CD8-positive, alpha-beta T cell (primary cell): ENCODE measurements at regions of chr2 and their contacts with region 1.

Region 1: DNA sequence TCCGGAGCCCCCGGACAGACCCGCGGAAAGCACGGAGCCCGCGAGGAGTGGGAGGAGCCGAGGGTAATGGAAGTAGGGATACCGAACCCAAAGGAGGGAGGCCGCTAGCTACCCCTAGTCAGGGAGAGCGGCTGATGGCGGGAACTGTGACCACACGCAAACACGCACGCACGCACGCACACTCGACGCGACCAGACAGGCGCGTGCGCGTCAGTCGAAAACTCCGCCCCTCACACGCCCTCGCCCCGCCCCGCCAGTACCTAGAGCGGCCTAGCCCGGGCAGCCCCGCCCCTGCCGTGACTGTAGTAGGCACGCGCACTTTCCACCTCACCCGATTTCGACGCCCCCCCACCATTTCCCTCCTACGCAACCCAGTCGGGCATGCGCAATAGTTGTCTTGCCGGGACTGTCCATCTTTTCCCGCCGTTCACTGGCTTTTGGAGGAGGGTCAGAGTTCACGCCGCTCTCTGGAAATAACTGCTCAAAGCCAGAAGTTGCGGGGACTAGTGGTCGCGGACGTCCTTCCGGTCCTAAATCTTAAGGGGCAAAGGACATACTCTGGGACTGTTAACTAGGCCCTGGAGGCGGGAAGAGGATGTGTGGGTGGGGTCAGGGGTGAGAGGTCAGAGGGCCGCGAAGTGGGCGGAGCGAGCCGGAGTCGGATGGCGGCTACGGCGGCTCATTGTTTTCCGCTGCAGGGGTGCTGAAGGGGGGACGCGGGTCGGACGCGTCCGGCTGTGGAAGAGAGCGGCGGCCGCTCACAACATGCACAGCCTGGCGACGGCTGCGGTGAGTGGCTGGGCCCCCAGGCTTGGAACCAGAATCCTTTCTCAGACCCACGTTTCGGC is at the starts of genes CNOT9 and USP37:
- DNase-seq: peak; percentile 99 to 100 (median 100)
- ATAC-seq: peak; percentile 90
- H3K4me3 ChIP-seq: peak within 1 kb of the TSS; percentile 84 to 92
- H3K4me3 Mint-ChIP-seq: peak within 1 kb of the TSS; percentile 96
- H3K27ac ChIP-seq: peak within 1 kb of the TSS; percentile 91 to 99
- H3K27ac Mint-ChIP-seq: peak within 1 kb of the TSS; percentile 98
- H3K4me1 ChIP-seq: peaks cover 45% of the 10 kb centered on the region
- H3K4me1 Mint-ChIP-seq: peaks cover 63% of the 10 kb centered on the region
- H3K27me3 ChIP-seq: no peaks in the 10 kb centered on the region
- H3K27me3 Mint-ChIP-seq: no peaks in the 10 kb centered on the region
- CTCF ChIP-seq: no peak
- total RNA-seq, gene CNOT9: 73.9 to 79.3 TPM
- total RNA-seq, gene USP37: 22.8 to 23.2 TPM

Region 2: DNA sequence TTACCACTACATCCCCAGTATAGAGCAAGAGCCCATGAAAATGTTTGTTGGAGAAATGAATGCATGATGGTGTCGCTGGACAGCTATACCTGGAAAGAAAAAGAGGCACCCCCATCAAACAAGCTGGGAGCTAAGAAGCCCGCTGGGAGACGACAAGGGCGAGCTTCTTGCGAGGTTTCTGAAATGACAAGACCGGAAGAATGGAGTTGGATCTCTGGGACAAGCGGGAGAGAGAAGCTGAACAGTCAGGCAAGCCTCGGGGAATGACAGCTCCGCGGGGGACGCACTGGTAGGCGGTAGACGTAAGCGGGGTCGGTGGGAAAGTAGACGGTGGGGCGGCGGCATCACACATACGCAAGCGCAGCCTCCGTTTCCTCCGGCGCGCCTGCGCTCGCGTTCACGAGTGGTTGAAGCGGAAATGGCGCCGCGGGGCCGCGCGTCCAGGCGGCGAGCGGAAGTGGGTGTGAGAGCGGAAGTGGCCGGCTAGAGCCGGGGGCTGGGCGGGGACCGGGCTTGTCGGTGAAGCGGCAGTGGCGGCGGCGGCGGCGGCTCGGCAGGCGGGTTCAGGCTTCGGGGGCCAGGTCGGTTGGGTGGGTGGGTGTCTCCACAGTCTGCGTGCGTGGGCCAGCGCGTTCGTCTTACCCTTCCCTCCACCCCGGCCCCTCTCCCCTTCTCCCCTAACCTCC is 351.6 kb before region 1 on chr2 and contains the start of gene ARPC2:
- CTCF ChIA-PET with region 1: no interaction called
- POLR2A ChIA-PET with region 1: no interaction called
- intact Hi-C with region 1: loop called (anchors 1 to 2 kb)
- DNase-seq: peak; percentile 90 to 98 (median 95)
- ATAC-seq: peak; percentile 78
- H3K4me3 ChIP-seq: peak within 1 kb of the TSS; percentile 91 to 97
- H3K4me3 Mint-ChIP-seq: peak within 1 kb of the TSS; percentile 91
- H3K27ac ChIP-seq: peak within 1 kb of the TSS; percentile 87 to 99
- H3K27ac Mint-ChIP-seq: peak within 1 kb of the TSS; percentile 97
- H3K4me1 ChIP-seq: peaks cover 36% of the 10 kb centered on the region
- H3K4me1 Mint-ChIP-seq: peaks cover 45% of the 10 kb centered on the region
- H3K27me3 ChIP-seq: no peaks in the 10 kb centered on the region
- H3K27me3 Mint-ChIP-seq: no peaks in the 10 kb centered on the region
- CTCF ChIP-seq: no peak
- total RNA-seq, gene ARPC2: 521 to 547 TPM

Region 3: DNA sequence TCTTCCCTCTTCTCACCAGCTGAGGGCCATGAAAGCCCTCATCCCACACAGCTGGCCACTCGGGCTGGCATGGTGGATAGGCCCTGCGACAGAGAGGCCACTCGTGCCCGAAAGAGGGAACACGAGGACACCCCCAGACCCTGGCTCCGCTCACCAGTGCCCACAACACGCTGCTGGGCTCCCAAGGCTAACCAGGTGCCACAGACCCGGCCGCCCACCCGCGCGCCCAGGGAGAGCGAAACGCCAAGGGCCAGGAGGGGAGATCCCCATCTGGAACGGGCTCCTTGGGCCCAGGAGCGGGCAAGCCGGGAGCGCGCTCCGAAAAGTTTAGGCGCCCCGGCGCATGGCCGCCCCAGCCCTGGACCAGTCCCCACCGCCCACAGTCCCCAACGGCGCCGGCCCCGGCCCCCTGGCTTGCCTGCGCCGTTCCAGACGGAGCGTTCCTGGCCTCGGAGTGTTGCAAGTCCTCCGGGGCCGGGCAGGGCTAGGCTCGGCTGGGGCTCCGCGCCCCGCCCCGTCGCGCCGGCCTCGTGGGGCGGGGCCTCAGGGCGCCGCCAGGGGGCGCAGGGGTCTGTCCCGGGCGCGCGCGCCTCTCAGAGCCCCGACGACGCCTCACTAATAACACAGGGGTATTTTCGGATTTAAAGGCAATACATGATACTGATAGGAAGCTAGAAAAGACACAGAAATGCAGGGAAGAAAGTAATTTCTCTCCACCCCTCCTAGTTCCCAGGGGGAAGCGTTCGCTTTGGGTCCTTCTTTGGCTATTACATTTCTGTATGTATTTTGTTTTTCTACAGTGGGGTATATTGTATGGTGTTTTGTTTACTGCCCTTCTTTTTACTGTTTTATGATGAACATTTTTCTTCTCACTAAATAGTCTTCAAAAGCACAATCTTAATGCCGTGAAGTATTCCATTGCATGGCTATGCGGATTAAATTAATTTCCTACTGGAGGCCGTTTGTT is 276.1 kb before region 1 on chr2 and contains the start of gene TMBIM1:
- CTCF ChIA-PET with region 1: no interaction called
- POLR2A ChIA-PET with region 1: no interaction called
- intact Hi-C with region 1: loop called (anchors 2 to 5 kb)
- DNase-seq: peak; percentile 64 to 91 (median 79)
- ATAC-seq: peak; percentile 82
- H3K4me3 ChIP-seq: peak within 1 kb of the TSS; percentile 79 to 89
- H3K4me3 Mint-ChIP-seq: peak within 1 kb of the TSS; percentile 83
- H3K27ac ChIP-seq: peak within 1 kb of the TSS; percentile 72 to 87
- H3K27ac Mint-ChIP-seq: peak within 1 kb of the TSS; percentile 98
- H3K4me1 ChIP-seq: peaks cover 50% of the 10 kb centered on the region
- H3K4me1 Mint-ChIP-seq: peaks cover 51% of the 10 kb centered on the region
- H3K27me3 ChIP-seq: no peaks in the 10 kb centered on the region
- H3K27me3 Mint-ChIP-seq: no peaks in the 10 kb centered on the region
- CTCF ChIP-seq: peak; percentile 93
- total RNA-seq, gene TMBIM1: 80.8 to 86.7 TPM

Region 4: DNA sequence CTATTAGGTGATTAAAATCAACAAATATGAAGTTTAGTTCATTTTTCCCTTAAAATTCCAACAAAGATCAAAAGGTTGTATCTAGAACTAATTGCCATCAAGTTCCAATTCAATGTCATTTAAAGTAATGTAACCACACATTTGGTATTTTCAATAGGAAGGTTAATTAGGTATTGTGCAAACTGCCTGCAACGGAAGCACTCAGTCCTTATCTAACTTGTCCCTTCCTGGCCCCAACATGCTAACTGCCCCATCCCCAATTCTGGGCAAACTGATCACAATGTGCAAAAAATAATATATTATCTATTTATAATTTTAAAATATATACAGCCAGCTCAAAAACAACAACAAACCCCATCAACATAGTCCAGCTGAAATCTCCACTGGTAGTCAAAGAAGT is 116.3 kb before region 1 on chr2:
- CTCF ChIA-PET with region 1: no interaction called
- POLR2A ChIA-PET with region 1: no interaction called
- intact Hi-C with region 1: no loop called
- DNase-seq: no peak
- ATAC-seq: no peak
- H3K4me3 ChIP-seq: no peak overlapping the region
- H3K4me3 Mint-ChIP-seq: no peak overlapping the region
- H3K27ac ChIP-seq: no peak overlapping the region
- H3K27ac Mint-ChIP-seq: no peak overlapping the region
- H3K4me1 ChIP-seq: no peaks in the 10 kb centered on the region
- H3K4me1 Mint-ChIP-seq: no peaks in the 10 kb centered on the region
- H3K27me3 ChIP-seq: no peaks in the 10 kb centered on the region
- H3K27me3 Mint-ChIP-seq: no peaks in the 10 kb centered on the region
- CTCF ChIP-seq: no peak

Region 5: GRCh38 chr2:218659258-218659987 is 91.0 kb after region 1 on chr2 and contains the starts of genes BCS1L and ZNF142:
- CTCF ChIA-PET with region 1: no interaction called
- POLR2A ChIA-PET with region 1: no interaction called
- intact Hi-C with region 1: loop called (anchors 1 kb)
- DNase-seq: peak; percentile 78 to 97 (median 92)
- ATAC-seq: peak; percentile 98
- H3K4me3 ChIP-seq: peak within 1 kb of the TSS; percentile 95 to 98
- H3K4me3 Mint-ChIP-seq: peak within 1 kb of the TSS; percentile 97
- H3K27ac ChIP-seq: peak within 1 kb of the TSS; percentile 66 to 80
- H3K27ac Mint-ChIP-seq: peak within 1 kb of the TSS; percentile 95
- H3K4me1 ChIP-seq: peaks cover 17% of the 10 kb centered on the region
- H3K4me1 Mint-ChIP-seq: peaks cover 34% of the 10 kb centered on the region
- H3K27me3 ChIP-seq: no peaks in the 10 kb centered on the region
- H3K27me3 Mint-ChIP-seq: no peaks in the 10 kb centered on the region
- CTCF ChIP-seq: no peak
- total RNA-seq, gene BCS1L: 13.1 to 17.4 TPM
- total RNA-seq, gene ZNF142: 41.6 to 42.6 TPM

Region 6: DNA sequence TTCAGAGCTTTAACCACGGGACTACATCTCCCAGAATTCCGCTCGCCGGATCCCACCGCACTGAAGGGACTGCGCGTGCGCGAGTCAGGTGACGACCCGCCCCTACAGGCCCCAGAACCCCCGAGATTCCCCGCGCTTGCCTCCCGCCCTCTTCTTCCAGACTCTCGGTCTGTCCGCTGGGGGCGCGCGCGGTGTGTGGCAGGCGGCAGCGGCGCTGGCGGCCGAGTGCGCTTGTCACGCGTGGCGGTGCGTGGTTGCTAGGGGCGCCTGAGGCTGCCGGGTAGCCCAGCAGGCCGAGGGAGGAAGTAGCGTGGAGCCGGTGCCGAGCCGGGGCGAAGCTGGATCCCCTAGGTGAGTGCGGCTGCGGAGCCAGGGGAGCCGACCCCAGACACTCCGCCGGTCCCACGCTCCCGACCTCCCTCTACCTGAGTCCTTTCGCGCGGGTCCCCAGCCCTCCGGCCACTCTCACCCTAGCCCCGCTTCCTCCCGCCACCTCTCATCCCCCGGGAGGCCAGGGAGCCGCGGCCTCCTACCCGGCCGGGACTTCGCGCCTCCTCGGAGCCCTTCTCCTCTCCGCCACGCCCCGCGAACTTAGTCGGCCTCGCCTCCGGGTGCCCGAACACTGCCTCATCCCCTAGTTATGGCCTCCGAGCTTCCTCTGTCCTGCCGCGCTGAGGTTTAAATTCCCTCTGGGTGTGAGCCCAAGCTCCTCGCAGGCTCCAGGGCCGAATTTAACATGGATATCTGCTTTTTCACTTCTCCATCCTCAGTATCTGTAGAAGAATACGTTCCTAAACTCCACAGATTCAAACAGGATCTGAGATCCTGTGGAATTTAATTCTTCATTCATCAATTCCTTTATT is 142.5 kb after region 1 on chr2 and contains the start of gene TTLL4:
- CTCF ChIA-PET with region 1: no interaction called
- POLR2A ChIA-PET with region 1: interaction called, 3 read pairs
- intact Hi-C with region 1: loop called in 1 of 2 experiments (anchors 2 kb)
- DNase-seq: peak; percentile 97 to 99 (median 99)
- ATAC-seq: peak; percentile 99
- H3K4me3 ChIP-seq: peak within 1 kb of the TSS; percentile 86 to 92
- H3K4me3 Mint-ChIP-seq: peak within 1 kb of the TSS; percentile 91
- H3K27ac ChIP-seq: peak within 1 kb of the TSS; percentile 73 to 90
- H3K27ac Mint-ChIP-seq: peak within 1 kb of the TSS; percentile 84
- H3K4me1 ChIP-seq: peaks cover 13% of the 10 kb centered on the region
- H3K4me1 Mint-ChIP-seq: peaks cover 19% of the 10 kb centered on the region
- H3K27me3 ChIP-seq: no peaks in the 10 kb centered on the region
- H3K27me3 Mint-ChIP-seq: peaks cover 6% of the 10 kb centered on the region
- CTCF ChIP-seq: peak; percentile 76
- total RNA-seq, gene TTLL4: 6.9 to 8.1 TPM

Region 7: GRCh38 chr2:219597552-219598307 is 1029.3 kb after region 1 on chr2 and contains the start of gene STK11IP:
- CTCF ChIA-PET with region 1: no interaction called
- POLR2A ChIA-PET with region 1: no interaction called
- intact Hi-C with region 1: loop called in 1 of 2 experiments (anchors 5 kb)
- DNase-seq: peak; percentile 74 to 95 (median 90)
- ATAC-seq: peak; percentile 84
- H3K4me3 ChIP-seq: peak within 1 kb of the TSS; percentile 79 to 90
- H3K4me3 Mint-ChIP-seq: peak within 1 kb of the TSS; percentile 97
- H3K27ac ChIP-seq: peak within 1 kb of the TSS; percentile 77 to 83
- H3K27ac Mint-ChIP-seq: peak within 1 kb of the TSS; percentile 97
- H3K4me1 ChIP-seq: peaks cover 9% of the 10 kb centered on the region
- H3K4me1 Mint-ChIP-seq: peaks cover 27% of the 10 kb centered on the region
- H3K27me3 ChIP-seq: no peaks in the 10 kb centered on the region
- H3K27me3 Mint-ChIP-seq: no peaks in the 10 kb centered on the region
- CTCF ChIP-seq: no peak
- total RNA-seq, gene STK11IP: 29.7 to 31.5 TPM